Activated CD4-positive, alpha-beta T cell treated with anti-CD3 and anti-CD28 coated beads, Interleukin-2, amount 10 ng/mL, durations not matched to agents 24 days and 14 days (primary cell): ENCODE measurements at regions of chr2 and their contacts with region 1.

Region 1: GRCh38 chr2:105576440-105577252 is 168.1 kb upstream of the NCK2 start:
- DNase-seq: peak; percentile 61
- H3K4me3 Mint-ChIP-seq: no peak overlapping the region
- H3K27ac Mint-ChIP-seq: peak overlapping the region; percentile 23
- H3K4me1 Mint-ChIP-seq: peaks cover 16% of the 10 kb centered on the region
- H3K27me3 Mint-ChIP-seq: peaks cover 7% of the 10 kb centered on the region

Region 2: DNA sequence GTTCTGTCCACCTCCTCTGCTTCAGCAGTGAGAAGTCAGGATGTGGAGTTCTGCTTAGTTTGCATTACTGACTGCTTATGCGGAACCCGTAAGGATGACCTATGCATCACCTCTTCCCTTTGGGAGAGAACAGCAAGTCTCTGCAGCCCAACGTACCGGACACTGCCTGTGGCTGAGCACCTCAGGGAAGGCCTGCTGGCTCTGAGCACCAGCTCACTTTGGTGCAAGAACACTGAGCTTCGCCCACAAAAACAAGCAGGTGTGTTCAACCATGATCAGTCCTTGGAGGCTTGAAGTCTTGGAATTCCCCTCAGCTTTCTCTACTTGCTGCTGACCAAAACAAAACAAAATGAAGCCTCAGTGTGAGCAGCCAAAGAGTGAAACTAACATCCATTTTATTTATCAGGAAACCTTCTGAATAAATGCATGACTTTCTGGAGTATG is 115.3 kb after region 1 on chr2:
- intact Hi-C with region 1: no loop called
- DNase-seq: no peak
- H3K4me3 Mint-ChIP-seq: no peak overlapping the region
- H3K27ac Mint-ChIP-seq: no peak overlapping the region
- H3K4me1 Mint-ChIP-seq: no peaks in the 10 kb centered on the region
- H3K27me3 Mint-ChIP-seq: peaks cover 2% of the 10 kb centered on the region

Region 3: DNA sequence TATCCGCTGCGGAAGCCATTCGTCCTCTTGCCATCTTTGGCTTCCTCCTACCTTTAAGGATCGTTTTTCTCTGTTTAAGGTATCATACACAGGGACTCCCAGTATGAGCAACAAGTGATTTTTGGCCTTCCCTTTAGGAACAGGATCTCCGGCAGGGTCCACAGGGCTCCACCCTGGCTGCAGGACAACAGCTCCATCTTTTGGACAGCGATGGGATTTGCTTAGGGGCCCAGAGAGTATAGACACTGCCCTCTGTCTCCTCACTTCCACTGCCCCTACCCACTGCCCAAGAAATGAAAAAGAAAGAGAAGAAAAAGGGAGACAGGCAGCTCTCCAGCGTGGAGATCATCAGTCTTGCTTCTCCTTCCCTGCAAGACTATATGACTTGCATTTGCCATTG is 392.9 kb after region 1 on chr2:
- intact Hi-C with region 1: loop called (anchors 2 kb)
- DNase-seq: peak; percentile 62
- H3K4me3 Mint-ChIP-seq: no peak overlapping the region
- H3K27ac Mint-ChIP-seq: no peak overlapping the region
- H3K4me1 Mint-ChIP-seq: peaks cover 3% of the 10 kb centered on the region
- H3K27me3 Mint-ChIP-seq: no peaks in the 10 kb centered on the region

Region 4: GRCh38 chr2:106085181-106085940 is 508.7 kb after region 1 on chr2:
- intact Hi-C with region 1: loop called (anchors 1 kb)
- DNase-seq: peak; percentile 86
- H3K4me3 Mint-ChIP-seq: peak overlapping the region; percentile 60
- H3K27ac Mint-ChIP-seq: peak overlapping the region; percentile 73
- H3K4me1 Mint-ChIP-seq: peaks cover 28% of the 10 kb centered on the region
- H3K27me3 Mint-ChIP-seq: no peaks in the 10 kb centered on the region

Region 5: DNA sequence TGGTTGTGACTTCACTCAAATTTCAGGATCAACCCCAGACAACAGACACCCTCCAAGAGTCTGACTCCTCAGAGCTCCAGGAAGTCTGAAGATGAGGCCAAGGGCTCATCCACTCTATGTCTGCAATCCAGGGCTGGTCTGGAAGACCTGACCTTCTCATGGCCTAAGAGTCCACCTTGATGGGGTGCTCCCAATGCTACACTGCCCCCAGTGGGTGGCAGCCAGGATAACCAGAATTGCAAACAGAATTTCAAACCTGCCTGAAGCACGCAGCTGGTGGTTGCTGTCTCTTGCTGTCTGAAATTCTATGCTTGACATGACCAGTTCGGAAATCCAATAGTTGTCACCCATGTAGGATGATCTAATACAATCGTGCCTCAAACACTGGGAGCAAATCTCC is 521.4 kb after region 1 on chr2:
- intact Hi-C with region 1: loop called (anchors 5 kb)
- DNase-seq: peak; percentile 75
- H3K4me3 Mint-ChIP-seq: no peak overlapping the region
- H3K27ac Mint-ChIP-seq: no peak overlapping the region
- H3K4me1 Mint-ChIP-seq: peaks cover 27% of the 10 kb centered on the region
- H3K27me3 Mint-ChIP-seq: no peaks in the 10 kb centered on the region